Activated CD4-positive, alpha-beta T cell treated with anti-CD3 and anti-CD28 coated beads, Interleukin-2, amount 10 ng/mL, durations not matched to agents 24 days and 14 days (primary cell): ENCODE measurements at regions of chr3 and their contacts with region 1.

Region 1: GRCh38 chr3:46931631-46932331 is 44.8 kb downstream of the CCDC12 start:
- DNase-seq: no peak
- H3K4me3 Mint-ChIP-seq: peak overlapping the region; percentile 43
- H3K27ac Mint-ChIP-seq: peak overlapping the region; percentile 86
- H3K4me1 Mint-ChIP-seq: peaks cover 59% of the 10 kb centered on the region
- H3K27me3 Mint-ChIP-seq: no peaks in the 10 kb centered on the region

Region 2: DNA sequence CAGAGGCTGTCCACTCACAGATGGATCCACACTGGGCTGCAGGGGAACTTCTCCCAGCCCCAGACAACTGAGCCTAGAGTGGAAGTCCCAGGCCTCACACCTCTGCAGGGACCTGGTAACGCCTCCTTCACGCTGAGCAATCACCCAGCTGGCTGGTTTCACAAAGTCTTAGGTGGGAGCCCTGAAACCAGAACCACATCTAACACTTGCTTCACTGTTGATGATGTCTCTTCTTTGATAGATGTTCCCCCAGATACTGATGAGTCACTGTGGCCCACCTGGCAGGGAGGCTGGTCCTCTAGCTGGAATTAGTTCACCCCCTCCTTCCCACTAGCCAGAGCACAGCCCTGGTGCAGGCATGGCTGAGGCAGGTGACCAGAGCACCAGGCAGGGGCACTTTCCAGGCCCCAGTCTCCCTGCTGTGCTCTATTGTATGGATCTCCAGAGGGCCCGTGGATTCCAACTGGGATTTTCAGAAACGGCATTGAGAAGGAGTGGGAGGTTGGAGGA is 102.0 kb before region 1 on chr3:
- intact Hi-C with region 1: no loop called
- DNase-seq: peak; percentile 54
- H3K4me3 Mint-ChIP-seq: no peak overlapping the region
- H3K27ac Mint-ChIP-seq: no peak overlapping the region
- H3K4me1 Mint-ChIP-seq: peaks cover 7% of the 10 kb centered on the region
- H3K27me3 Mint-ChIP-seq: peaks cover 2% of the 10 kb centered on the region

Region 3: DNA sequence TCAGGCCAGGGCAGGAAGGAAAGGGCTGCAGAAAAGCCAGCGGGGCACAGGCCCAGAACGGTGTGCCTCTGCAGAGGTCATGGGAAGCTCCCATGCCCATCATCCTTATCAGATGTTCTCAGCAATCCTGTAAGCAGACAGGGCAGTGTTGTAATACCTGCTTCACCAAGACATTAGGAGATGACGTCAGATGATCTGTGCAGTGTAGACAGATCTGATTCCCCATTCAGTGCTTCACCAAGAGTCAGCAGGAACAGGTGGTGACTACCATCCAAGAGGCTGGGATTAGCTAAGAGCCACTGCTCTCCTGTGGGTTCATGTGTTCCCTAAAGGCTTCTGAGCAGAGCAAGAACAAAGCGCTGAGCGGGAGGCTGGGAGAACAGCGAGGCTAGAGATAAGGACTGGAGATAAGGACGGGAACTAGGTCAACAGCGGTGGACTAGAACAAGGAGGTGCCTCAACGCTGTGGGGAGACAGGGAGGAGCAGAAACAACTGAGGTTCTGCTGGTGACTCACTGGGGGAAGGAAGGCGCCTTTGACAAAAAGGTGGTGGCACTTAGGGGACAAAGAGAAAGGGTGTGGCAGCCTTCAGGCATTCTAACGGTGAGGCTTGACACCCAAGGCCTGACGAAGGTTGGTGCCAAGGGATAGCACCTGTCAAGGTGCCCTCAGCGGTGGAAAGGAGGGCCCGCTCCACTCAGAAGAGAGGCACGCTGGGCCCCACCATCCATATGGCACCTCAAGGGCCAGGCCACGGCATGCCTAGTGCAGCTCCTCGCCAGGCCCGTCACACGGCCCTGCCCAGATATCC is 16.4 kb after region 1 on chr3:
- intact Hi-C with region 1: loop called (anchors 2 kb)
- DNase-seq: peak; percentile 87
- H3K4me3 Mint-ChIP-seq: peak overlapping the region; percentile 80
- H3K27ac Mint-ChIP-seq: peak overlapping the region; percentile 94
- H3K4me1 Mint-ChIP-seq: peaks cover 71% of the 10 kb centered on the region
- H3K27me3 Mint-ChIP-seq: no peaks in the 10 kb centered on the region

Region 4: DNA sequence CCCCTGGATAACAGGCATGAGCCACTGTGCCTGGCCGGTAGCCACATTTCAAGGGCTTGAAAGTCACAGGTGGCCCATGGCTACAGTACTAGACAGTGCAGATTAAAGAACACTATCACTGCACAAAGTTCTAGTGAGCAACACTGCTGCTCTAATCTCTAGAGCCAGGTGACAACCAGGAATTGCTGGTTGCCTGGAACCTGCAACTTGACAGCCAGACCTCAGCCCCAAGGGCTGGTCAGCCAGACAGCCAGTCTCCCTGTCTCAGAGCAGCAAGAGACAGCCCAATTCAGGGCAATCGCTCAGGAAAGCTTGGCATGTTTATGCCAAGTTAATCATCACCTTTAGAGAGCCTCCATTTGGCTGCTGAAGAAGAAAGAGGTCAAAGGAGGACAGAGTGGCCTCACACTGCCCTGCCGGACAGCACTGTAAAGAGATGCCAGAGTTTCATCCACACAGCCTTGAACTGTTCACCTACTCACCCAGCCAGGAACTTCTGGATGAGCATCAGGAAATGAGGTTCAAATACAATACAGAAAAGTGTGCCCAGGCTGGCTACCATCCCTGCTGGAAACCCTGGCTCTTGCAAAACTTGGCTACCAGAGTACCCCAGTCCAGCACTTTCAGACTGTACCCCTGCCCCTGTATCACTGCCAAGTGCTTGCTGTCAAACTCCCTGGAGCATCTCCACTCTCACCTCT is 38.8 kb after region 1 on chr3:
- intact Hi-C with region 1: loop called (anchors 5 kb)
- DNase-seq: no peak
- H3K4me3 Mint-ChIP-seq: no peak overlapping the region
- H3K27ac Mint-ChIP-seq: peak overlapping the region; percentile 77
- H3K4me1 Mint-ChIP-seq: peaks cover 77% of the 10 kb centered on the region
- H3K27me3 Mint-ChIP-seq: no peaks in the 10 kb centered on the region

Region 5: GRCh38 chr3:46987743-46988401 is 56.1 kb after region 1 on chr3:
- intact Hi-C with region 1: no loop called
- DNase-seq: peak; percentile 97
- H3K4me3 Mint-ChIP-seq: peak overlapping the region; percentile 89
- H3K27ac Mint-ChIP-seq: peak overlapping the region; percentile 97
- H3K4me1 Mint-ChIP-seq: peaks cover 62% of the 10 kb centered on the region
- H3K27me3 Mint-ChIP-seq: no peaks in the 10 kb centered on the region